Caco-2 (cell line): ENCODE measurements at regions of chr9 and their contacts with region 1.

Region 1: GRCh38 chr9:76761448-76761847 is 2.8 kb upstream of the PCA3 start:
- DNase-seq: no peak
- H3K4me3 ChIP-seq: no peak overlapping the region
- H3K4me3 Mint-ChIP-seq: no peak overlapping the region
- H3K27ac Mint-ChIP-seq: no peak overlapping the region
- H3K4me1 ChIP-seq: no peaks in the 10 kb centered on the region
- H3K4me1 Mint-ChIP-seq: peaks cover 5% of the 10 kb centered on the region
- H3K27me3 ChIP-seq: no peaks in the 10 kb centered on the region
- H3K27me3 Mint-ChIP-seq: no peaks in the 10 kb centered on the region
- CTCF ChIP-seq: no peak

Region 2: GRCh38 chr9:76744336-76744735 is 17.1 kb before region 1 on chr9:
- CTCF ChIA-PET with region 1: no interaction called
- POLR2A ChIA-PET with region 1: no interaction called
- intact Hi-C with region 1: no loop called
- DNase-seq: no peak
- H3K4me3 ChIP-seq: no peak overlapping the region
- H3K4me3 Mint-ChIP-seq: no peak overlapping the region
- H3K27ac Mint-ChIP-seq: no peak overlapping the region
- H3K4me1 ChIP-seq: no peaks in the 10 kb centered on the region
- H3K4me1 Mint-ChIP-seq: no peaks in the 10 kb centered on the region
- H3K27me3 ChIP-seq: no peaks in the 10 kb centered on the region
- H3K27me3 Mint-ChIP-seq: no peaks in the 10 kb centered on the region
- CTCF ChIP-seq: no peak

Region 3: DNA sequence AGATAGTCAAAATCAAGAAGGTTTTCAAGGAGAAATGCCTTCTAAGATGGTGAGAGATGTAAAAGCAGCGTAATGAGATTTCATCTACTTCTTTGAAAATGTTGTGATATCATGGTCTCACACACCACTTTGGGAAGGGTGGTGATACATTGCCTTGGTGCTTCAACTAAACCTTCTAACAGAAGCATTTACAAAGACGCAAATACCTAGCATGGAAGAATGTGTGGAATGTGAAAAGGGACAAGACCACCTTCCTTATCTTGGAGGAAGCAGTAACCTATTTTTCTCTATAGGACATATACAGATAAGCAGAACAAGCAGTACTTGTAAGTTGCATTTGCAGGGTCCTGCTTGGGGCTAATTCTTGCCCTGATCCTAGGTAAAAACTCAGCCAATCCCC is 41.6 kb after region 1 on chr9:
- CTCF ChIA-PET with region 1: no interaction called
- POLR2A ChIA-PET with region 1: no interaction called
- intact Hi-C with region 1: loop called (anchors 5 kb)
- DNase-seq: no peak
- H3K4me3 ChIP-seq: no peak overlapping the region
- H3K4me3 Mint-ChIP-seq: peak overlapping the region; percentile 57
- H3K27ac Mint-ChIP-seq: peak overlapping the region; percentile 22
- H3K4me1 ChIP-seq: peaks cover 6% of the 10 kb centered on the region
- H3K4me1 Mint-ChIP-seq: peaks cover 13% of the 10 kb centered on the region
- H3K27me3 ChIP-seq: no peaks in the 10 kb centered on the region
- H3K27me3 Mint-ChIP-seq: no peaks in the 10 kb centered on the region
- CTCF ChIP-seq: no peak

Region 4: GRCh38 chr9:77725820-77726219 is 964.4 kb after region 1 on chr9:
- CTCF ChIA-PET with region 1: no interaction called
- POLR2A ChIA-PET with region 1: no interaction called
- intact Hi-C with region 1: no loop called
- DNase-seq: no peak
- H3K4me3 ChIP-seq: no peak overlapping the region
- H3K4me3 Mint-ChIP-seq: no peak overlapping the region
- H3K27ac Mint-ChIP-seq: no peak overlapping the region
- H3K4me1 ChIP-seq: no peaks in the 10 kb centered on the region
- H3K4me1 Mint-ChIP-seq: no peaks in the 10 kb centered on the region
- H3K27me3 ChIP-seq: no peaks in the 10 kb centered on the region
- H3K27me3 Mint-ChIP-seq: no peaks in the 10 kb centered on the region
- CTCF ChIP-seq: no peak